Activated naive CD4-positive, alpha-beta T cell treated with anti-CD3 and anti-CD28 coated beads for 36 hours (primary cell): ENCODE measurements at regions of chr4 and their contacts with region 1.

Region 1: DNA sequence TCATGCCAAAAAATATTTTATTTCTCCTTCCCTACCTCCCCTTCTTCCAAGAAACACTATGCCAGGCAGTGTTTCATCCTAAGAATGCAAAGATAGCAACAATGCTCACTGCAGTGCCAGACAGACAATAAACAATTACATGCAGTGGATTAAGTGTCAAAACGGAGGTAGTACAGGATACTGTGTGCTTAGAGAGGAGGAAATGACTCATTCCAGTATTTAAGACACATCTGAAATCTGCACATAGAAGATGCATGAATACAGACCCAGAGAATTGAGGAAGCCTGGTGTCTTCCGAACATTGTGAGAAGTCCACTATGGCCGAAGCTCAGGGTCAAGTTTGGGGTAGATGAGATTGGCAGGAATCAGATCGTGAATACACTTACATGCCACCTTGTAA is 326.4 kb downstream of the PPP3CA start:
- DNase-seq: no peak
- H3K4me3 Mint-ChIP-seq: no peak overlapping the region
- H3K27ac Mint-ChIP-seq: no peak overlapping the region
- H3K4me1 Mint-ChIP-seq: peaks cover 27% of the 10 kb centered on the region
- H3K27me3 Mint-ChIP-seq: peaks cover 4% of the 10 kb centered on the region

Region 2: GRCh38 chr4:99334880-99335279 is 1686.1 kb before region 1 on chr4:
- CTCF ChIA-PET with region 1: no interaction called
- intact Hi-C with region 1: no loop called
- DNase-seq: no peak
- H3K4me3 Mint-ChIP-seq: no peak overlapping the region
- H3K27ac Mint-ChIP-seq: no peak overlapping the region
- H3K4me1 Mint-ChIP-seq: no peaks in the 10 kb centered on the region
- H3K27me3 Mint-ChIP-seq: peaks cover 8% of the 10 kb centered on the region

Region 3: DNA sequence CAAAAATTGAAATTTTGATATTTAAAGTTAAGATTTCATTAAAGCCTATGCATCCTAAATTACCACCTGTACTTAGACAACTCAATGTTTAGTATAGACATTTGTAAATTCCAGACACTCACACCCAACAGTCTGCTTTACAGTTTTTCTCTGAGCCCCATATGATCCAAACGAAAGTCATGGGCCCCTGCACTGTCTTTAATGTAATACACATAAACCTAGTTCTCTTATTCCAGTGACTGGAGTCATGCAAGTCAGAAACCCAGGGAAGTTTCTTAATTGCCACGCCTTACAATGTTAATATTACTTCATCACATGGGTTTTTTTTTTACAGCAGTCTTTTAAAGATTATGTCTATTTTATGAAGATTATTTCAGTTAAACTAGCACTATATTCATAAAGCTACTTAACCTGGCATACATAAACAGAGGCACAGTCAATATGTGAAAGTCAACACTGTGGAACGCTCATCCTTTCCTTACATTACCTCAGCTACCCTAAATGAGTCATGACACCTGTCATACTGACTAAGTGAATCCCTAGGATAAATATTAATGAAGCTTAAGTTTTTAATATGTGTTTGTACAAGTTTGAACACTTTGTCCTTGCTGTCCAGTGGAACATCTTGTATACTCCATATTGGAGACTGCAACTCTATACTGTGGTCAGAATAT is 1003.2 kb before region 1 on chr4:
- CTCF ChIA-PET with region 1: no interaction called
- intact Hi-C with region 1: loop called (anchors 5 kb)
- DNase-seq: peak; percentile 22
- H3K4me3 Mint-ChIP-seq: no peak overlapping the region
- H3K27ac Mint-ChIP-seq: peak overlapping the region; percentile 11
- H3K4me1 Mint-ChIP-seq: peaks cover 10% of the 10 kb centered on the region
- H3K27me3 Mint-ChIP-seq: peaks cover 3% of the 10 kb centered on the region

Region 4: GRCh38 chr4:100823066-100823992 is 197.6 kb before region 1 on chr4:
- CTCF ChIA-PET with region 1: no interaction called
- intact Hi-C with region 1: loop called (anchors 1 kb)
- DNase-seq: peak; percentile 53
- H3K4me3 Mint-ChIP-seq: no peak overlapping the region
- H3K27ac Mint-ChIP-seq: peak overlapping the region; percentile 82
- H3K4me1 Mint-ChIP-seq: peaks cover 9% of the 10 kb centered on the region
- H3K27me3 Mint-ChIP-seq: peaks cover under 1% of the 10 kb centered on the region

Region 5: DNA sequence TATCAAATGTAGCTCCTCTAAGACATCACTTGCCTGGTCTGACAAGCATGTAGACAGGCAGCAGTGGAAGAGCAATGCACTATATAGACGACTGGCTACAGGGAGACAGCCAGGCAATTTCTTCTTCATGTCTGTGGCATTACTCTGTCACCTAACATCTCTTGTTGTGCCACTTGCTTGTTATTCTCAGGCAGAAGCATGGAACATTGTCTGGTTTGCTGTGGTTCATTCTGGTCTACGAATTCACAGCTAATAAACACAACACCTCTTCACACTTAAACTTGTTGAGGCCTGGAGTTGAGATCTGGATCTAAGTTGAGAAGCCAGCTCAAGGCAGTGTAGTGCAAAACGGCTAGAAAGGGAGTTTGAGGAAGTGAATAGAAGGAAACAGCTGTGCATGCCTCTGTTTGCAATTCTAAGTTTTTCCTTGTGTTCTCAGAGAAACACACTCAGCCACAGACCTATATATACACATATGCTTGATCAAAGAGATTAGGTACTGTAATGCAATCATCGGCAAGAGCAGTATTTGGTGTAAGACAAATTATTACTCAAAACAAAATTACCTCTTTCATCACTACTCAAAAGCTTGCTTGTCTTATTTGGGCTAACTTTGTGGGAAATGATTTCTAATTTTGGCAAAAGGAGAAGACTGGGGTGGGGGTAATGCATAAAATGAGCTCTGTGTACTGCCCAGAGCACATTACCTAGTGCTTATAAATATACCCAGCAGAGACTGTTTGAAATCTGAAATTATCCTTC is 82.6 kb after region 1 on chr4:
- CTCF ChIA-PET with region 1: no interaction called
- intact Hi-C with region 1: loop called (anchors 1 kb)
- DNase-seq: no peak
- H3K4me3 Mint-ChIP-seq: no peak overlapping the region
- H3K27ac Mint-ChIP-seq: no peak overlapping the region
- H3K4me1 Mint-ChIP-seq: peaks cover 21% of the 10 kb centered on the region
- H3K27me3 Mint-ChIP-seq: no peaks in the 10 kb centered on the region

Region 6: GRCh38 chr4:101282076-101282844 is 261.3 kb after region 1 on chr4:
- CTCF ChIA-PET with region 1: no interaction called
- intact Hi-C with region 1: loop called (anchors 2 kb)
- DNase-seq: peak; percentile 72
- H3K4me3 Mint-ChIP-seq: no peak overlapping the region
- H3K27ac Mint-ChIP-seq: no peak overlapping the region
- H3K4me1 Mint-ChIP-seq: peaks cover 42% of the 10 kb centered on the region
- H3K27me3 Mint-ChIP-seq: no peaks in the 10 kb centered on the region

Region 7: GRCh38 chr4:101419324-101420135 is 398.6 kb after region 1 on chr4:
- CTCF ChIA-PET with region 1: no interaction called
- intact Hi-C with region 1: loop called (anchors 1 kb)
- DNase-seq: no peak
- H3K4me3 Mint-ChIP-seq: no peak overlapping the region
- H3K27ac Mint-ChIP-seq: no peak overlapping the region
- H3K4me1 Mint-ChIP-seq: peaks cover 36% of the 10 kb centered on the region
- H3K27me3 Mint-ChIP-seq: peaks cover 43% of the 10 kb centered on the region

Region 8: DNA sequence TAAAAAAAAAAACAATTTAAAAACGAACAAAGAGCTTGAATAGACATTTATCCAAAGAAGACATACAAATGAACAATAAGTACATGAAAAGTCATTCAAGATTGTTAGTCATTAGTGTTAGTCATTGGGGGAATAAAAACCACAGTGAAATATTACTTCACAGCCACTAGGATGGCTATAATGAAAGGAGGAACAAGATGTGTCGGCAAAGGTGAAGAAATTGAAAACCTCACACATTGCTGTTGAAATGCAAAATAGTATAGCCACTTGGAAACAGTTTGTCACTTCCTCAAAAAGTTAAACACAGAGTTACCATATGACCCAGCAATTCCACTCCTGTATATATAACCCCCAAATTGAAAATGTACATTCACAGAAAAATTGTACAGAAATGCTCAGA is 1369.5 kb after region 1 on chr4:
- CTCF ChIA-PET with region 1: no interaction called
- intact Hi-C with region 1: loop called (anchors 1 kb)
- DNase-seq: no peak
- H3K4me3 Mint-ChIP-seq: no peak overlapping the region
- H3K27ac Mint-ChIP-seq: no peak overlapping the region
- H3K4me1 Mint-ChIP-seq: peaks cover 17% of the 10 kb centered on the region
- H3K27me3 Mint-ChIP-seq: peaks cover 4% of the 10 kb centered on the region